Naive thymus-derived CD4-positive, alpha-beta T cell (primary cell): ENCODE measurements at regions of chr1 and their contacts with region 1.

Region 1: DNA sequence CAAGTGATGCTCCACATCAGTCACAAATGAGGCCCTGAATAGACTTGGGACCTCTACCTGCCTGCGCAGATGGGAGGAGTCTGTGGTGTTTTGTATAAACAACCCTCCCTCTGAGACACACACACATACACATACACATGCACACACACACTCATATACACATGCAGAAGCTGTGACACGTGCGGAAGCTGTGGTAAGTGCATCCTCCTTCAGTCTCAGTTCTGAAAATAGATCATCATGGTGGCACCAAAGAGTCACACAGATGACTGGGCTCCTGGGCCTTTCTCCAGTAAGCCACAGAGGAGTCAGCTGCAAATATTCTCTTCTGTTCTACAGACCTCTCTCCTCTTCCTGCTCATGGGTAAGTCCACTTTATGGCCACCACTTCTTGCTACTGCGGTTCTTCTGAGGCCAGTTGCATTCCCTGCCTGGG is at the start of gene LY9:
- DNase-seq: peak; percentile 28 to 97 (median 94)
- ATAC-seq: peak; percentile 96
- H3K4me3 ChIP-seq: peak within 1 kb of the TSS; percentile 66
- H3K4me3 Mint-ChIP-seq: peak within 1 kb of the TSS; percentile 86 to 99 (median 98)
- H3K27ac ChIP-seq: peak within 1 kb of the TSS; percentile 83
- H3K27ac Mint-ChIP-seq: peak within 1 kb of the TSS; percentile 91 to 99 (median 99)
- H3K4me1 ChIP-seq: peaks cover 22 to 29% of the 10 kb centered on the region in 2 donors
- H3K4me1 Mint-ChIP-seq: peaks cover 31 to 66% (median 48%) of the 10 kb centered on the region in 7 donors
- H3K27me3 ChIP-seq: no peaks in the 10 kb centered on the region
- H3K27me3 Mint-ChIP-seq: peaks cover 0 to 21% (median 0%) of the 10 kb centered on the region in 5 donors
- total RNA-seq, gene LY9: 5.6 to 141 (median 105) TPM

Region 2: DNA sequence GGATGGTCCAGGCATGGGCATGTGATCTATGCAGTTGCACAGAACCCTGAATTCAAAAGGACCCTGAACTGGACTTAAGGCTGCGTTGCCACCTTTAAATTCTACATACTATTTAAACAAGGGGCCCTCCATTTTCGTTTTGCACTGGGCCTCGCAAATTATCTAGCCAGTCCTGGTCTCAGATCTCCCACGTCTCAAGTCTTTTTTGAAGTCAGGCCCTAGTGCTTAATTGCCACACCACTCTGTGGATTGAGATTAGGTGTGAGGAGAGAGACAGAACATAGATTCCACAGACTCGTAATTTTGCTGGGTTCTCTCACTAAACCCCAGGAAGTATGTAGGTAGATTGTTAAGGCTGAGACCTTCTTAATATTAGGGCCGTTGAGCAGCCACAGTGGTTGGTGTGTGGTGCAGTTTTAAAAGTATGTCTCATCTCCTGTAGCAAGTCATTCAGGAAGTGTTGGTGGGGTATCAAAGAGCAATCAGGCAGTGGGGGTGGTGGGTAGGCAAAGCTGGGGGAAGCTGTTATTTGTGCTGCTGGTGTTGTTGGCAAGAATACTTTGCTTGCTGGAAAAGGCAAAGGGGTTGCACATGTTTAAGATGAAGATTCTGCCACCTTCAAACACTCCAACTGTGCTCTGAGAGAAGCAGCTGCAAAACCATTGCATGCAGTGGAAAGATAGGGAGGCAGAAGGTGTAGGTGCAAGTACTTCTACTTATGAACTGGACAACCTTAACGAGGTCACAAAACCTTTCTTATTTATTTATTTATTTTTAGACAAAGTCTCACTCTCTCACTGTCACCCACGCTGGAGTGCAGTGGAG is 227.9 kb before region 1 on chr1:
- CTCF ChIA-PET with region 1: no interaction called
- POLR2A ChIA-PET with region 1: interaction called, 3 read pairs
- intact Hi-C with region 1: loop called in 1 of 2 experiments (anchors 5 kb)
- DNase-seq: peak in 8 of 9 donors; percentile 49 to 70 (median 59)
- ATAC-seq: peak; percentile 92
- H3K4me3 ChIP-seq: peak overlapping the region; percentile 11
- H3K4me3 Mint-ChIP-seq: peak overlapping the region; percentile 6 to 90 (median 73)
- H3K27ac ChIP-seq: peak overlapping the region; percentile 67
- H3K27ac Mint-ChIP-seq: peak overlapping the region; percentile 86 to 98 (median 89)
- H3K4me1 ChIP-seq: peaks cover 75 to 96% of the 10 kb centered on the region in 2 donors
- H3K4me1 Mint-ChIP-seq: peaks cover 63 to 95% (median 83%) of the 10 kb centered on the region in 7 donors
- H3K27me3 ChIP-seq: no peaks in the 10 kb centered on the region
- H3K27me3 Mint-ChIP-seq: no peaks in the 10 kb centered on the region

Region 3: GRCh38 chr1:160711602-160712311 is 84.2 kb before region 1 on chr1 and contains the start of gene CD48:
- CTCF ChIA-PET with region 1: interaction called, 3 read pairs
- POLR2A ChIA-PET with region 1: interaction called, 17 read pairs
- intact Hi-C with region 1: loop called in 1 of 2 experiments (anchors 1 kb)
- DNase-seq: peak in 8 of 9 donors; percentile 39 to 88 (median 82)
- ATAC-seq: peak; percentile 67
- H3K4me3 ChIP-seq: peak within 1 kb of the TSS; percentile 90
- H3K4me3 Mint-ChIP-seq: no peak within 1 kb of the TSS
- H3K27ac ChIP-seq: peak within 1 kb of the TSS; percentile 99
- H3K27ac Mint-ChIP-seq: no peak within 1 kb of the TSS
- H3K4me1 ChIP-seq: peaks cover 52 to 60% of the 10 kb centered on the region in 2 donors
- H3K4me1 Mint-ChIP-seq: peaks cover 22 to 49% (median 44%) of the 10 kb centered on the region in 7 donors
- H3K27me3 ChIP-seq: no peaks in the 10 kb centered on the region
- H3K27me3 Mint-ChIP-seq: no peaks in the 10 kb centered on the region
- total RNA-seq, gene CD48: 253 to 438 (median 358) TPM

Region 4: GRCh38 chr1:160768295-160768657 is 27.7 kb before region 1 on chr1:
- CTCF ChIA-PET with region 1: interaction called, 28 read pairs
- POLR2A ChIA-PET with region 1: interaction called, 16 read pairs
- intact Hi-C with region 1: no loop called
- DNase-seq: peak; percentile 66 to 89 (median 82)
- ATAC-seq: peak; percentile 98
- H3K4me3 ChIP-seq: peak overlapping the region; percentile 48
- H3K4me3 Mint-ChIP-seq: peak overlapping the region; percentile 61 to 94 (median 82)
- H3K27ac ChIP-seq: peak overlapping the region; percentile 56
- H3K27ac Mint-ChIP-seq: peak overlapping the region; percentile 89 to 99 (median 96)
- H3K4me1 ChIP-seq: peaks cover 16% of the 10 kb centered on the region in 2 donors
- H3K4me1 Mint-ChIP-seq: peaks cover 19 to 29% (median 21%) of the 10 kb centered on the region in 7 donors
- H3K27me3 ChIP-seq: no peaks in the 10 kb centered on the region
- H3K27me3 Mint-ChIP-seq: no peaks in the 10 kb centered on the region

Region 5: GRCh38 chr1:160806109-160806665 is 10.2 kb after region 1 on chr1:
- CTCF ChIA-PET with region 1: interaction called, 24 read pairs
- POLR2A ChIA-PET with region 1: interaction called, 18 read pairs
- intact Hi-C with region 1: loop called in 1 of 2 experiments (anchors 1 kb)
- DNase-seq: peak in 1 of 9 donors; percentile 20
- ATAC-seq: no peak
- H3K4me3 ChIP-seq: no peak overlapping the region
- H3K4me3 Mint-ChIP-seq: peak overlapping the region in 8 of 10 donors; percentile 33 to 78 (median 66)
- H3K27ac ChIP-seq: no peak overlapping the region
- H3K27ac Mint-ChIP-seq: peak overlapping the region in 8 of 9 donors; percentile 18 to 90 (median 68)
- H3K4me1 ChIP-seq: peaks cover 38 to 48% of the 10 kb centered on the region in 2 donors
- H3K4me1 Mint-ChIP-seq: peaks cover 9 to 92% (median 87%) of the 10 kb centered on the region in 7 donors
- H3K27me3 ChIP-seq: no peaks in the 10 kb centered on the region
- H3K27me3 Mint-ChIP-seq: peaks cover 0 to 27% (median 0%) of the 10 kb centered on the region in 5 donors

Region 6: DNA sequence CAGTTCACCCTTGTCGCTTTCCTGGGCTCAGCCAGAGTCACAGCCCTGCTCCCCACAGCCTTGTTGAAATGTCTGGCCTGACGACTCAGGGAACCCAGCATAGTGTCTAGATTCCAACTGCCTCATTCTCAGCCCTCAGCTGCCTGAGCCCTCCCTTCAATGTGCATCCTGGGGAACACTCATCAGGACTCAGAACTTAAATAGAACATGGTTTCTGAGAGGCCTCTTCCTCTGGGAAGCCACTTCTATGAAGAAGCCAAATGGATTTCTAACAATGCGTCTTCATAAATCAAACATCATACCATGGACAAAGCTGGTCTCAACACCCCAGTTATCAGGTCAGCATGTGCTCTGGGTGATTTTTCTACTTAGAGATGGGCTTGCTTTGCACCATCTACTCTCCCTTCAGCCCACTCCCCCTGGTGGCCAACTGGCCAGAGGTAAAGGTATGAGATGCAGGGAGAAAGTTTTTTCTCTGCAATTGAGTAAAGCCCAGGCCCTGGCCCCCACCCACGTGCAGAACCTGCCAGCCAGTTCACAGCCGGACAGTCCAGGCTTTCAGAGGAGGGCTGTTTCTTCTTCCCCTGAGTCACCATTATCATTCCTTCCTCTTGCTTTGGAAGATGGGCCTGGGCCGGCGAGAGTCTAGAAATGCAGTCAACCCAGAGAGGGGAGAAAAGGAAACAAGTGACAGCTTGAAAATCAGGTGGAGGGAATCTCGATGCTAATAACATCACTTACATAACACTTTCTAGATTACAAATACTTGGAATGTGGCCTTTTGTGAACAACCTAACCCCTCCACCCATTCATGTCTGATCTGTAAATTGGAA is 34.6 kb after region 1 on chr1:
- CTCF ChIA-PET with region 1: interaction called, 43 read pairs
- POLR2A ChIA-PET with region 1: interaction called, 19 read pairs
- intact Hi-C with region 1: loop called in 1 of 2 experiments (anchors 1 kb)
- DNase-seq: peak; percentile 51 to 77 (median 67)
- ATAC-seq: peak; percentile 75
- H3K4me3 ChIP-seq: no peak overlapping the region
- H3K4me3 Mint-ChIP-seq: no peak overlapping the region
- H3K27ac ChIP-seq: peak overlapping the region; percentile 10
- H3K27ac Mint-ChIP-seq: peak overlapping the region in 8 of 9 donors; percentile 68 to 96 (median 86)
- H3K4me1 ChIP-seq: peaks cover 6 to 18% of the 10 kb centered on the region in 2 donors
- H3K4me1 Mint-ChIP-seq: peaks cover 20 to 54% (median 36%) of the 10 kb centered on the region in 7 donors
- H3K27me3 ChIP-seq: no peaks in the 10 kb centered on the region
- H3K27me3 Mint-ChIP-seq: no peaks in the 10 kb centered on the region